ENCODE measurements at regions of chr1 and their contacts with region 1.

Region 1: DNA sequence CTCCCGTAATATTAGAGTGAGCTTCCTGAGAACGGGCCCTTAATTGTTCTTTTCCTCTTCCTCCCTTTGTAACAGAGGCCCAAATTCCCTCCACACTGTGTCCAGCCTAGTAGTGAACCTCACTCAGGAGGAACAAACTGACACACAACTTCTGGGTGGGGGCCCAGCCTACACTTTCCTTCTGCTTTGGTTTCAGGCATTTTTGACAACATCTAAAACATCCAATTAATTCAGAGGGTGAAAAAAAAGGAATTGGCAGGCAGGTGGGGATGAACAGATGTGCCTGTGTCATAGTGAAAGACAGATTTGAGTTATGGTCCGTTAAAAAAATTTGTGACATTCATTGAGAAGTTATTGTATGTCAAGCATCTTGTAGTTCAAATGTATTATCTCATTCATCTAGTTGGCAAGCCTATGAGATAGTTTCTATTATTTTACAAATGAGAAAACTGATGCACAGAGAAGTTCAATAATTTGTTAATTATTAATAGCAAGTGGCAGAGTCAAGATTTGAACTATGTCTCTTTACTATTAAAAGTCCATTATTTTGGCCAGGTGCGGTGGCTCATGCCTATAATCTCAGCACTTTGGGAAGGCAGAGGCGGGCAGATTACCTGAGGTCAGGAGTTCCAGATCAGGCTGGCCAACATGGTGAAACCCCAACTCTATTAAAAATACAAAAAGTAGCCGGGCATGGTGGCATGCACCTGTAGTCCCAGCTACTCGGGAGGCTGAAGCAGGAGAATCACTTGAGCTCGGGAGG is 41.6 kb upstream of the LRIG2 start:
- DNase-seq: no peak
- ATAC-seq: no peak
- H3K4me3 ChIP-seq: no peak overlapping the region
- H3K27ac ChIP-seq: peak overlapping the region in 1 of 12 donors; percentile 83
- H3K4me1 ChIP-seq: peaks cover 0 to 23% (median 2%) of the 10 kb centered on the region in 12 donors
- H3K27me3 ChIP-seq: no peaks in the 10 kb centered on the region
- CTCF ChIP-seq: no peak
- POLR2A ChIP-seq: no peak

Region 2: DNA sequence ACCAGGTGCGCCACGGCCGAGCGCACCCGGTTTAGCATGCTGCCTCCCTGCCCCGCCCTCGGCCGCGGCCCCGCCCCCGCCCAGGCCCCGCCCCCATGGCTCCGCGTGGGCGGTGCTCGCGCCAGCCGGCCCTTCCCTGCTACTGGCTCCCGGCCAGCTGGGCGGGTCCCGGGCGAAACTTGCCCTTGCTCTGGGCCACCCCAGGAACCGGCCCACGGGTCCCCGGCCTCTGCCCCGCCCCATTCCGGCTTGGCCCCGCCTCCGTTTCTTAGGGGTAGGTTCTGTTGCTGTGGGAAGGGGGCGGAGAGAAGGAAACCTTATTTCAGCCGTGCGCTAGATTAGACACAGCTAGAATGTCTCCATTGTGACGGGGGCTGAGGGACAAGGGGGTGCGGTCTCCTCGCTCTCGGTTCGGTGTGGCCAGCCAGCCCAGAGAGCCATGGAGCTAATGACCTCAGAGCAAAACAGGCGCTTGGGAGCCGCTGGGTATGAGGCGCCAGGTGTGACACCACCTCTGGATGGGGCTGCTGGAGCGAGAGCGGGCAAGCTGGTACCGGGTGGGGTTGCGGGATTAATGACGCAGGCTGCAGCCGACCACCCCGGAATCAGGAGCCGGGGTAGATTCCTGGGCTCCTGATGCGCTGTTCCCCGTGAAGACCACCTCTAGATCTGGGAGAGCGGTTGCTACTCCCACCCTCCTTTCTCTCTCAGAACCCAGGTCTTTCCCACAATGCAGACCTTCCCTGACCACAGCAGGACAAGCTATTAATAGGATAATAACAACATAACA is 315.9 kb before region 1 on chr1 and contains the start of gene PPM1J:
- intact Hi-C with region 1: no loop called
- DNase-seq: peak; percentile 98 to 99 (median 99)
- ATAC-seq: peak; percentile 86 to 93 (median 88)
- H3K4me3 ChIP-seq: peak within 1 kb of the TSS; percentile 40 to 93 (median 70)
- H3K27ac ChIP-seq: peak within 1 kb of the TSS in 11 of 12 donors; percentile 31 to 83 (median 71)
- H3K4me1 ChIP-seq: peaks cover 0 to 35% (median 20%) of the 10 kb centered on the region in 12 donors
- H3K27me3 ChIP-seq: peaks cover 0 to 12% (median 0%) of the 10 kb centered on the region in 9 donors
- CTCF ChIP-seq: no peak
- POLR2A ChIP-seq: peak in 1 of 2 donors; percentile 81
- total RNA-seq, gene PPM1J: 4.2 to 11.5 (median 8.3) TPM

Region 3: DNA sequence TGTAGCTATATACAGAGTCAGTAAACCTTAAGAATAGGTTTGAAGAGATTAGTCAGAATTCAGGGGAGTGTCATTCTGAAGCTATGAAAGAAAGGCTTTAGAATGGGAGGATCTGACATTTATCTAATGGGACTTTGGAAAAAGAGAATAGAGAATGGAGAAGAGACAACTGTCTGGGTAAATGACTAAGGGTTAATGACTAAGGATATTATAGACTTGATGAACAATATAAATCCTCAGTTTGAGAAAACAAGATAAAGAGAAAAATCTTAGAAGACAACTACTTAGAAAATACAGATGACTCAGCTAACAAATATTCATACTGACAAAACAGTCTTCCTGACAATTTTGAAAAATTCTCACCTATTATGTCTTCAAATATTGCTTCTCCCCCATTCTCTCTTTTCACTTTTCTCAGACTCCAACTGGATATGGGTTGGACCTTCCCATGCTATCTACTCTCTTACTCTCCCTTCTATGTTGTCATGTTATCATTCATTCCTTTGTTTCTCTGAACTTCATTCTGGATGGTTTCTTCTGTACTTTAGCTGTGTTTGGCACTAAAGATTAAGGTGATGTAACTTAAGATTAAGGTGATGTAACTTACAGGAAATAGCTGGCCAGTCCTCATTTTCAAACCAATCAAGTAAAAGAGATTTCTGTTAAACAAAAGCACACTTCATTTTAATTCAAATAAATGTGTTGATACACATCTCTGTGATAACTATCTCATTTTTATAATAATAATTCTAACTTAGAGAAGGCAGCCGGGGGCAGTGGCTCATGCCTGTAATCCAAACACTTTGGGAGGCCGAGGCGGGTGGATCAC is 95.7 kb before region 1 on chr1:
- intact Hi-C with region 1: no loop called
- DNase-seq: no peak
- ATAC-seq: peak in 1 of 4 donors; percentile 7
- H3K4me3 ChIP-seq: no peak overlapping the region
- H3K27ac ChIP-seq: peak overlapping the region in 2 of 12 donors; percentile 15 to 34
- H3K4me1 ChIP-seq: peaks cover 0 to 45% (median 30%) of the 10 kb centered on the region in 12 donors
- H3K27me3 ChIP-seq: no peaks in the 10 kb centered on the region
- CTCF ChIP-seq: no peak
- POLR2A ChIP-seq: no peak

Region 4: GRCh38 chr1:112991402-112992120 is 39.8 kb before region 1 on chr1:
- intact Hi-C with region 1: loop called in 1 of 10 experiments (anchors 5 kb)
- DNase-seq: no peak
- ATAC-seq: peak in 1 of 4 donors; percentile 35
- H3K4me3 ChIP-seq: no peak overlapping the region
- H3K27ac ChIP-seq: peak overlapping the region in 9 of 12 donors; percentile 5 to 94 (median 83)
- H3K4me1 ChIP-seq: peaks cover 0 to 49% (median 9%) of the 10 kb centered on the region in 12 donors
- H3K27me3 ChIP-seq: no peaks in the 10 kb centered on the region
- CTCF ChIP-seq: no peak
- POLR2A ChIP-seq: no peak

Measured in heart left ventricle (tissue), 16 donors.